ENCODE measurements at regions of chr14 and their contacts with region 1.

Region 1: GRCh38 chr14:49692811-49693734 is at the start of gene KLHDC1:
- DNase-seq: peak; percentile 35 to 91
- H3K4me3 ChIP-seq: peak within 1 kb of the TSS; percentile 82 to 83
- H3K27ac ChIP-seq: peak within 1 kb of the TSS; percentile 93 to 94
- H3K4me1 ChIP-seq: peaks cover 0 to 15% of the 10 kb centered on the region in 2 donors
- H3K27me3 ChIP-seq: no peaks in the 10 kb centered on the region
- CTCF ChIP-seq: no peak
- total RNA-seq, gene KLHDC1: not detected

Region 2: DNA sequence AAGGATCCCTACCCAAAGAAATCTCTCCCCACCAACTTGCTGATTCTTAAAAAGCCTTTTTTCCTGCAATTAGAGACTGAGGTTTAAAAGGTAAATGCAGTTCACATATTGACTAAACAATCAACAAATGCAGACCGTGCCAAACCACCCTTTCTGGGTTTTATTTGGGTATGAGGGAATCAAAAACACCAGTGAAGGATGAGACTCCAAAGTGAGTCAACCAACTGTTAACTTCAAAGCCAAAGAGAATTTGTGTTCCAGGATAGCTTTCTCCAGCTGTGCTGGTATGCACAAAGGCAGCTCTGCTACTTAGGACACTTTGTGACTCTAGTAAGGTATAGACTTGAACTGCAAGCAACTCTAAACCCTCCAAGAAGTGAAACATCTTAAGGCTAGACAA is 146.3 kb before region 1 on chr14:
- intact Hi-C with region 1: no loop called
- DNase-seq: no peak
- H3K4me3 ChIP-seq: no peak overlapping the region
- H3K27ac ChIP-seq: no peak overlapping the region
- H3K4me1 ChIP-seq: no peaks in the 10 kb centered on the region
- H3K27me3 ChIP-seq: no peaks in the 10 kb centered on the region
- CTCF ChIP-seq: no peak

Region 3: GRCh38 chr14:49585803-49586672 is 107.0 kb before region 1 on chr14 and contains the start of gene RPS29:
- intact Hi-C with region 1: loop called (anchors 5 kb)
- DNase-seq: peak; percentile 92 to 99
- H3K4me3 ChIP-seq: peak within 1 kb of the TSS; percentile 73 to 90
- H3K27ac ChIP-seq: peak within 1 kb of the TSS; percentile 78 to 93
- H3K4me1 ChIP-seq: peaks cover 4 to 16% of the 10 kb centered on the region in 2 donors
- H3K27me3 ChIP-seq: no peaks in the 10 kb centered on the region
- CTCF ChIP-seq: no peak
- total RNA-seq, gene RPS29: 2,262 TPM

Region 4: GRCh38 chr14:49633640-49634546 is 59.2 kb before region 1 on chr14:
- intact Hi-C with region 1: loop called (anchors 1 kb)
- DNase-seq: peak; percentile 72 to 96
- H3K4me3 ChIP-seq: peak overlapping the region; percentile 54 to 79
- H3K27ac ChIP-seq: peak overlapping the region; percentile 93 to 96
- H3K4me1 ChIP-seq: peaks cover 0 to 7% of the 10 kb centered on the region in 2 donors
- H3K27me3 ChIP-seq: no peaks in the 10 kb centered on the region
- CTCF ChIP-seq: peak; percentile 73 to 95 (median 76)

Region 5: DNA sequence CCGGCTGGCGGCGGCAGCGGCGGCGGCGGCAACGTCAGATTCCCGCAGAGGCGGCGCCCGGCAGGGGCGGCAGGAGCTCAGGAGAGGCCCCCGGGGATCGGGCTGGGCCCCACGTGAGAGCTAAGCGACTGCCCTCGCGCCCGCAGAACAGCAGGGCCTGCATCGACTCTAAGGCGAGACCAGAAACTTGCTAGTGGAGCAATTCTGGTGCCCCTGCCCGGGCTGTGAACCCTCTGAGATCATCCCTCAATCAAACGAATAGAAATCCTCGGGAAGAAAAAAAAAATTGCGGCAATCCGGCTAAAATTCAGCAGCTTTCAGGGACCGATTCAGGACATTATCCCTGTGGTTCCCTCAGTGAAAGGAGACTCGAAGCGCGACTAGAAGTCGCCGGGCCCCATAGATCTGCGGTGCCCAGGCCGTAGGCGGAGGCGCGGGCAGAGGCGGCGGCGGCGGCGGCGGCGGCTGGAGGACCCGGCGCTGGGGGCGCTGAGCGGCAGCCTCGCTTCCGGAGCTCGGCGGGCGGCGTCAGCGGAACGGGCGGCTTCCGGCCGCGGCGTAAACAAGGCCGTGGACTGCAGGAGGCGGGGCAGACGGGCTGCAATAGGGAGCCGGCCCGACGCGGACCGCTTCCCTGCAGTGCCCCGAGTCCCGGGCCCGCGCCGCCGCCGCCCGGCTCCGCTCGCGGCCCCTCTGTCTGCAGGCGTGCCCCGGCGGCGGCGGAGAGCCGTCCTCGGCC is 74.7 kb after region 1 on chr14 and contains the start of gene KLHDC2:
- intact Hi-C with region 1: loop called (anchors 2 kb)
- DNase-seq: peak; percentile 50 to 93
- H3K4me3 ChIP-seq: peak within 1 kb of the TSS; percentile 83 to 94
- H3K27ac ChIP-seq: peak within 1 kb of the TSS; percentile 94 to 97
- H3K4me1 ChIP-seq: peaks cover 0 to 24% of the 10 kb centered on the region in 2 donors
- H3K27me3 ChIP-seq: no peaks in the 10 kb centered on the region
- CTCF ChIP-seq: peak in 2 of 3 experiments; percentile 21 to 29
- total RNA-seq, gene KLHDC2: 11.7 TPM

Region 6: GRCh38 chr14:49867831-49868723 is 175.0 kb after region 1 on chr14:
- intact Hi-C with region 1: loop called (anchors 10 kb)
- DNase-seq: peak; percentile 89 to 98
- H3K4me3 ChIP-seq: peak overlapping the region; percentile 64 to 66
- H3K27ac ChIP-seq: peak overlapping the region; percentile 89 to 90
- H3K4me1 ChIP-seq: peaks cover 3 to 8% of the 10 kb centered on the region in 2 donors
- H3K27me3 ChIP-seq: no peaks in the 10 kb centered on the region
- CTCF ChIP-seq: no peak

Measured in ascending aorta (tissue), 2 donors.